Activated naive CD4-positive, alpha-beta T cell treated with anti-CD3 and anti-CD28 coated beads, Interleukin-2, amount 10 ng/mL, durations not matched to agents 7 days and 5 days (primary cell): ENCODE measurements at regions of chr17 and their contacts with region 1.

Region 1: DNA sequence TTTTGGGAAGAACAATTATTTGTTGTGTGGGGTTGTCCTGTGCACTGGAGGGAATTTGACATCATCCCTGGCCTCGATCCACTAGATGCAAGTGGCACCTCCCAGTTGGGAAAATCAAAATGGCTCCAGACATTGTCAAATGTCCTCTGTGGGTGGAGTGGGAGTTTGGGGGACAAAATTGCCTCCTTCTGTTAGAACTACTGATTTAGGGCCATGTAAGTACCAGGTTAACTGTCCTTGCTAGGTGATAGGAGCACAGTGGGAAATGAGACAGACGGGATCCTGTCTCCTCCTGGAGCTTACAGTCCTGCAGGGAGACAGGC is 56.8 kb downstream of the ARHGAP23 start:
- DNase-seq: no peak
- H3K4me3 Mint-ChIP-seq: no peak overlapping the region
- H3K27ac Mint-ChIP-seq: no peak overlapping the region
- H3K4me1 Mint-ChIP-seq: peaks cover 7% of the 10 kb centered on the region
- H3K27me3 Mint-ChIP-seq: peaks cover 21% of the 10 kb centered on the region

Region 2: DNA sequence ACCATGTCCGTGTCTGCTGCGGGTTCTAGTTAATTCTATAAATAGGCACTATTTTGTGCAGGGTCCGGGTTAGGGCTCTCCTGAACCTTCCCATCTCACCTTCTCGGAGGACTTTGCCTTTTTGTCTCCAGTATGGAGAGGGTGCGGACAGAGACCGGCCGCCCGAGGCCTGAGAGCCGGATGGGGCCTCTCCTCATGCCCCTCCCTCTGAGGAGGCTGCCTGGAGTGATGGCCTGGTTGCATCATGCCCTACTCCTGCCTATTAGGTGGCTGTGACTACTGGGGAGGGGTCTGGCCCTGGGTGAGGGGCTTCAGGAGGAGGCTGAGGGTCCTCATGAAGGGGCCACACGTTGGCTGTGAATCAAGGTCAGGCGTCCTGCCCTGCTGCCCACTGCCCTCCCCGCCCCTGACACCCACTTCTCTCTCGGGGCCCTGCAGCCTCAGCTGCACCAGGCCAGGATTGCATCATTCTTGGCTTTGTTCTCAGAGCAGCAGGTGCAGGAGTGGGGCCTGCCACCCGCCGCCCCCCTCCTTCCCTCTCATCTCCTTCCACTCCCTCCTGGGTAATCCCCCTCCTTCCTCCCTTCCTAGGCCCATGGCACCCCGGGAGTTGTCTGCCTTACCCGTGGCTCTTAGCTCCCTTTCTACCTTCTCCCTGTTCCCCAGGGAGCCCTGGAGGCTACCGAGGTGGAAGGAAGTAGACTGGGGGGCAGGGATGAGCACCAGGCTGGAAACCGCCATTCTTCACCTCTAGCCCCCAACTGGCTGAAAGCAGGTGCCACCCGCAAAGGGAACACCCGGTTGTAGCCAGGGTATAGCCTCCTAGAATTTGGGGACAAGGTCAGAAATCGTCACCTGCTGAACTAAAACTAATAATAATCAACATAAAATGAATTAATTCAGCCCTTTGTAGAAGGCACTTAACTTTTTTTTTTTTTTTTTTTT is 69.6 kb before region 1 on chr17:
- CTCF ChIA-PET with region 1: no interaction called
- DNase-seq: no peak
- H3K4me3 Mint-ChIP-seq: no peak overlapping the region
- H3K27ac Mint-ChIP-seq: peak overlapping the region; percentile 33
- H3K4me1 Mint-ChIP-seq: peaks cover 14% of the 10 kb centered on the region
- H3K27me3 Mint-ChIP-seq: peaks cover 61% of the 10 kb centered on the region

Region 3: DNA sequence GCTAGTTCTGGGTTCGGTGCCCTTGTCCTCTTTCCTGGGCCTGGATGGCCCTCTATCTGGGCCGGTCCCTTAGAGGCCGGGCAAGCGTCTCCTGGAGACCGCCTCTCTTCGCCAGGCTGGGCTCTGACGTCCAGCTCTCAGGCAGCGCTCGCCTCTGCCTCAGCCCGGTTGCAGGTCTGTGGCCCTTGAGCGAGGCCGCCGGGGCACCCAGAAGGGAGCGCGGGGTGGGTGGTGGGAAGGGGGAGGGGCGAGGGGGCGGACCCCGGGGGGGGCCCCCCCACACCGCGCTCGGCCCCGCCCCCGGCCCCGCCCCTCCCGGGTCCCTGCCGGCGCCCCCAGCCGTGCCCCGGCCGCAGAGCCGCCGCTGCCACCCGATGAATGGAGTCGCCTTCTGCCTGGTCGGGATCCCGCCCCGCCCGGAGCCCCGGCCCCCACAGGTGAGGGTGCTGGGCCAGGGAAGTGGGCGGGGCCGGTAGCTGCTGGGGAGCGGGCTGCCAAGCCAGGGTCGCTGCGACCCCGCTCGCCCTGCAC is 56.9 kb before region 1 on chr17 and contains the start of gene ARHGAP23:
- CTCF ChIA-PET with region 1: interaction called, 17 read pairs
- DNase-seq: peak; percentile 58
- H3K4me3 Mint-ChIP-seq: peak within 1 kb of the TSS; percentile 49
- H3K27ac Mint-ChIP-seq: no peak within 1 kb of the TSS
- H3K4me1 Mint-ChIP-seq: peaks cover 7% of the 10 kb centered on the region
- H3K27me3 Mint-ChIP-seq: peaks cover 82% of the 10 kb centered on the region